MCF 10A (cell line): ENCODE measurements at regions of chr16 and their contacts with region 1.

Region 1: DNA sequence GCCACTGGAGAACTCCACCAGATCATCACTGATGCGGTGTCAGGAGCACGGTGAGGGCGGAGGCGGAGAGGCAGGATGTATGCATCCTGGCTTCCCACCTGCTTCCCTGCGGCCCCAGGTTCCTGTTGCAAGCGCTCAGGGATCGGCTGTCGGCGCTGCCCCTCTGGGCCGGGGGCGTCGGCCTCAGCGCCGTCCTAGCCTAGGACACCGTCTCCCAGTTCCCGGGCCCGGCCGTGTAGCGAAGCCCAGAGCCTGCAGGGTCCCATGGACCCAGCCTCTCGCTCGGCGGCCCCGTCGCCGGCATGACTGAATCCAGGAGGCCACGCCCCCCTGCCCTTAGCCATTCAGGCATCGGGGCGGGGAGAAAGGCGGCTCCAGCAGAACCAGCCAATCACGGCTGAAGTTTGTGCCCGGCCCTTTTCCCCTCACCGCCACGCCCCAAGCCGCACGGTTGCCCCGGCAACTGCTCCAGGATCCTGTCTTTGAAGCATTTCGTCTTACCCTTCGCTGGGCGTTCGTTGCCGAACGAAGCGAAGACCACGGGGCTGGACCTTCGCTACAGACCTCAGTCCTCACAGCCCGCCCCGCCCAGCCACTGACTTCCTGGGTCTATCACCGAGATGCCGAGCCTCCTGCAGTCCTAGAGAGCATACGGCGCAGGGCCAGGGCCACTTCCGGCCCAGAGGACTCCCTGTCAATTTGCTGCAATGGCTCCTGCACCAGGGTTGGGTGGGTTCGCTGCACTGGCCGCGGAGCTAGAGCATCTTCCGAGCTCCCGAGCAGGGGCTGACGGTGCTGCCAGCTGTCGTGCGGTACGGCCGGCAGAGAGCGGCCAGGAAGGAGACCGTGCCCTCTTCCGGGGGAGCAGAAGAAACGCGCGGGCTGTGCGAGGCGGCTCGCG is 10.6 kb upstream of the ZNF213 start:
- DNase-seq: peak; percentile 96
- H3K4me3 Mint-ChIP-seq: peak overlapping the region; percentile 91
- H3K27ac Mint-ChIP-seq: peak overlapping the region; percentile 90
- H3K4me1 Mint-ChIP-seq: peaks cover 21% of the 10 kb centered on the region
- H3K27me3 Mint-ChIP-seq: no peaks in the 10 kb centered on the region
- CTCF ChIP-seq: peak; percentile 21

Region 2: DNA sequence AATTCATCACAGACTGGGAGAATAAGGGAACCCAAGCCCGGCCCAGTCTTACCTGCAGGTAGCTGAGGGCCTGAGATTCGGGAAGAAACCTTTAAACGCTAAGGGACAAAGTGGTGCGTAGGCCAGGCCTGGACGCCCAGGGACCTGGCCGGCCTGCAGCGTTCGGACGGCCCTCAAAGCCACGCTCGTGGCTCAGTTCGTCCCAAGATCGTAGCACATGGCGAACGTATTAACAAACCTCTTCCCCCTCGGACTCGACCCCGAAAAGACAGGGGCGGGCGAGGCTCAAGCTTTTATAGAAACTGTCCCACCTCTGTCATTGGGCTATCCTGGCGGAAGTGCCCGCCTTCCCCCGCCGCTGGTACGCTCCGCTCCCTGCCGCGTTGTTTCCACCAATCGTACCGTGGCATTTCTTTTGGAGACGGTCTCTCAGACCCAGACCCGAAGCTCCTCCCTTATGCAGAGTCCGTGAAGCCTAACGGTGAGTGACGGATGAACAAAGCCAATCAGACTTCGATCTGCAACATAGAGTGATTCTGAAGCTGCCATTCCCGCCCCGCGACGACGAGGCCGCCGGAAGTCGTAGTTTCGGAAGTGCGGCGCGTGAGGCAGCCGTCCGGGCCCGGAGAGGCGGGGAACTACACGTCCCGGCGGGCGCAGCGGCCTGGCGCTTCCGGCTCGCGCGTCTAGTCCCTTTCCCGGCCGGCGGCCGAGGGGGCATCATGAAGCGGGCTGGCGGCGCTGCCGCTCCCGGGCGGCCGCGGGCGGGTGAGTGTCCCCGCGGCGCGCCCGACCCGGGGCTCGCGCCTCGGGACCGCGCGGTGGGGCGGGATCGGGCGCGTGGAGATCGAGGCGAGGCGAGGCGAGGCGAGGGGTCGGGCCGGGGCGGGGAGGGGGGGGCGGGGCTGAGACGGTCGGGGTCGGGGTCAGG is 968.9 kb before region 1 on chr16 and contains the start of gene TRAF7:
- CTCF ChIA-PET with region 1: no interaction called
- POLR2A ChIA-PET with region 1: no interaction called
- intact Hi-C with region 1: no loop called
- DNase-seq: peak; percentile 100
- H3K4me3 Mint-ChIP-seq: peak within 1 kb of the TSS; percentile 96
- H3K27ac Mint-ChIP-seq: peak within 1 kb of the TSS; percentile 82
- H3K4me1 Mint-ChIP-seq: peaks cover 29% of the 10 kb centered on the region
- H3K27me3 Mint-ChIP-seq: no peaks in the 10 kb centered on the region
- CTCF ChIP-seq: no peak
- total RNA-seq, gene TRAF7: 87.4 and 98.6 TPM in 2 replicates

Region 3: DNA sequence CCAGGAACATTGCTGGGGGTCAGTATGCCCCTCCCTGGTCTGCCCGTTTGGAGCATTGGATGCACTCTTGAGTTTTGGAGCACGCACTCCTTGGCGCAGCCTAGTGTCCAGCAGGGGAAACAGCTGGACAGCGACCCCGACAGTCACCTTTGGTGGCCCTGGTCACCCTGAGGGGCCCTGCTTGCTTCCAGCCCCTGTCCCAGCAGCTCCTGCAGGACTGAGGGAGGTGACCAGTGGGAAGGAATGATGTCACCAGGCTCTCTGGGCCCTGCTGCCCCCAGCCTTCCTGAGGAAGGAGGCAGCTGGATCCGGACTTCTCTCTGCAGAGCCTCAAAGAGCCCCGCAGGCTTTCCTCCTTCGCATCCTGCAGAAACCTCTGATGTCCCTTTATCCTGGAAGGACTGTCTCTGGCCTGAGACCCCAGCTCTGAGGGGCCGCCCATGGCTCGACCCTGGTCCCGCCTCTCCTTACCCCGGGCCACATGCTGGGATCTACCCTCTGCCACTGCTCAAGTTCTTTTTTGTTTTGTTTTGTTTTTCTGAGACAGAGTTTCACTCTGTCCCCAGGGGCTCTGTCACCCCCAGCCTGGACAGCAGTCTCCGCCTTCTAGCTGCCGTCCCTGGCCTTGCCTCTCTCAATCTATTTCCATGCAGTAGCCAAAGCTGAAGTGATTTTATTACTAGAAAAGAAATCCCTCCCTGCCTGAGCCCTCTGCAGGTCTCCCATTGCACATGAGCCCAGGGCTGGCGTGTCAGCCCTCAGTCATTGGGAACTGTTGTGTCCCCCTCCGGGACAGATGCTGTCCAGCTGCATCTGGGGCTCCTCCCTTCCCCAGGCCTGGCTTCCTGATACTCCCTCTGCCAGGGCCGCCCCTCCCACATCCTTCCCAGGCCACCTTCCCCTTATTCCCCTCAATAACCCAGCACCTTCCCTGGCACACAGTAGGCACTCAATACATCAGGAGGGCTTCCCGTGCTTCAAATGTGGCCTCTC is 36.7 kb before region 1 on chr16:
- CTCF ChIA-PET with region 1: no interaction called
- POLR2A ChIA-PET with region 1: no interaction called
- intact Hi-C with region 1: no loop called
- DNase-seq: no peak
- H3K4me3 Mint-ChIP-seq: no peak overlapping the region
- H3K27ac Mint-ChIP-seq: no peak overlapping the region
- H3K4me1 Mint-ChIP-seq: no peaks in the 10 kb centered on the region
- H3K27me3 Mint-ChIP-seq: no peaks in the 10 kb centered on the region
- CTCF ChIP-seq: peak; percentile 26

Region 4: GRCh38 chr16:3106205-3106928 is 17.9 kb before region 1 on chr16:
- CTCF ChIA-PET with region 1: interaction called, 34 read pairs
- POLR2A ChIA-PET with region 1: interaction called, 33 read pairs
- intact Hi-C with region 1: no loop called
- DNase-seq: peak; percentile 91
- H3K4me3 Mint-ChIP-seq: peak overlapping the region; percentile 74
- H3K27ac Mint-ChIP-seq: peak overlapping the region; percentile 82
- H3K4me1 Mint-ChIP-seq: peaks cover 6% of the 10 kb centered on the region
- H3K27me3 Mint-ChIP-seq: no peaks in the 10 kb centered on the region
- CTCF ChIP-seq: no peak

Region 5: GRCh38 chr16:3112058-3112880 is 12.0 kb before region 1 on chr16 and contains the start of gene ZNF205:
- CTCF ChIA-PET with region 1: interaction called, 34 read pairs
- POLR2A ChIA-PET with region 1: interaction called, 33 read pairs
- intact Hi-C with region 1: no loop called
- DNase-seq: peak; percentile 79
- H3K4me3 Mint-ChIP-seq: peak within 1 kb of the TSS; percentile 85
- H3K27ac Mint-ChIP-seq: peak within 1 kb of the TSS; percentile 29
- H3K4me1 Mint-ChIP-seq: peaks cover 13% of the 10 kb centered on the region
- H3K27me3 Mint-ChIP-seq: no peaks in the 10 kb centered on the region
- CTCF ChIP-seq: no peak
- total RNA-seq, gene ZNF205: 11.8 and 12.1 TPM in 2 replicates

Region 6: GRCh38 chr16:3242709-3243108 is 118.5 kb after region 1 on chr16:
- CTCF ChIA-PET with region 1: no interaction called
- POLR2A ChIA-PET with region 1: no interaction called
- intact Hi-C with region 1: no loop called
- DNase-seq: peak; percentile 84
- H3K4me3 Mint-ChIP-seq: no peak overlapping the region
- H3K27ac Mint-ChIP-seq: no peak overlapping the region
- H3K4me1 Mint-ChIP-seq: peaks cover 6% of the 10 kb centered on the region
- H3K27me3 Mint-ChIP-seq: no peaks in the 10 kb centered on the region
- CTCF ChIP-seq: no peak